ENCODE measurements at regions of chr14 and their contacts with region 1.

Region 1: GRCh38 chr14:22556990-22557623 is 31.9 kb downstream of the DAD1 start:
- DNase-seq: peak; percentile 75 to 85
- H3K4me3 ChIP-seq: peak overlapping the region in 1 of 3 donors; percentile 12
- H3K27ac ChIP-seq: peak overlapping the region; percentile 22 to 67 (median 29)
- H3K4me1 ChIP-seq: peaks cover 28 to 50% of the 10 kb centered on the region in 2 donors
- H3K27me3 ChIP-seq: no peaks in the 10 kb centered on the region
- CTCF ChIP-seq: peak; percentile 86 to 100 (median 98)
- POLR2A ChIP-seq: no peak

Region 2: DNA sequence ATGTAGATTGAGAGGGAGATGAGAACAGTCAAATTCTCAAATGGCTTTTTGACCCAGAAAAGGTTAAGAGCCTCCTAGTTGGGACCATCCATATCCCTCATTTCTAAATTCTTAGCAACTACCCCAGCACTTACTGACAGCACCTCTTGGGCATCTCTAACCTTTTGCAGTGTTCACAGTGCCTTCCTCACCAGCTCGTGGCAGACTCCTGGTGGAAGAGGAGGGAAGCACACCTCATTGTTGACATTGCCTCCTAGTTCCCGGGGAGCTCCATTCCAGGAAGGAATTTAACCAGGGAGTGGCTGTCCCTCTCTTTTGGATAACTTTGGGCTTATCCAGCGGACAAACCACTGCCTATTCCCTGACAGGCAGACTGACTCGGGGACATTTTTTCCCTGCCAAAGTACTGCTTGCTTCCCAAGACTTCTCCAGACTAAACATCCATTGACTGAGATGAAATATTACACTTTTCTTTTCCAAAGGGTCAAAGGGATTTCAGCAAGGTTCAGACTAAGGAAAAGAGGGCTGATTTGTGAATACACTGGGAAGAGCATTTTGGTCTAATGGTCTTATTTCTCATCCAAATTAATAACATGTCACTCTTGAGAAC is 96.0 kb after region 1 on chr14:
- intact Hi-C with region 1: loop called (anchors 5 kb)
- DNase-seq: peak; percentile 70 to 79
- H3K4me3 ChIP-seq: no peak overlapping the region
- H3K27ac ChIP-seq: no peak overlapping the region
- H3K4me1 ChIP-seq: peaks cover 0 to 4% of the 10 kb centered on the region in 2 donors
- H3K27me3 ChIP-seq: no peaks in the 10 kb centered on the region
- CTCF ChIP-seq: peak; percentile 61 to 90 (median 85)
- POLR2A ChIP-seq: no peak